ENCODE measurements at regions of chr6 and their contacts with region 1.

Region 1: DNA sequence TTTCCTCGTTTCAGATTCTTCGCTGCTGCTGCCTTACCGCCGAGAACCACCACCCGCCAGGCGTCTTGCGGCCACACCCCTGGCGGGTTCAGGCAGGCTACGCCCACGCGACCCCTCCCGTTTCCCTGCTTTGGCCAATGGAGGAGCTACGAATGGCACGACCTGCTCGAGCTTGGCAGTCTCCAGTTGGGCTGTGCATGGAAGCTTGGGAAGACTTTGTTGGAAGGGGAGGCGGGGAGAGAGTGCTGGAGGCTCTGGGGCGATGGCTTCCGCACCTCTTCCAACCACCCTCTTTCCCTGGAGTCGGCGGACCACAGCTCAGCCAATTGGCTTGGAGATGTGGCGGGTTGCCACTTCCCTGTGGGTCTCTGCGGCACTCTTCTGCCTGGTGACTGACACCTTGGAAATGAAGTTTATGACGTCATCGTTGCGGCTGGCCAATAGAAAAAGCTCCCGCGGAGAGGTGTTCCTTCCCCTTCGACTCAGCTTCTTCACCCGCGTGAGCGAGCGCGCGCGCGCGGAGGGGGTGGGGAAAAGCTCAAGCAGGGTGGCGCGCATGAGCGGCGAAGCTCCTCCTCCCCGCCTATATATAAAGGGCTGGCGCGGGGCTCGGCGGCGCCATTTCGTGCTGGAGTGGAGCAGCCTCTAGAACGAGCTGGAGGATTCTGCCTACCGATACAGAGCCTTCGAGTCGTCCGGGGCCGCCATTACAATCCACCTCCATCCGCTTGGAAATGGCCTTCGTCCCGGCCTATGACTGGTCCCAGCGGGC is 3.4 kb downstream of the BRD2 start:
- DNase-seq: peak; percentile 100
- H3K4me3 ChIP-seq: peak overlapping the region; percentile 90 to 95
- H3K4me3 Mint-ChIP-seq: peak overlapping the region; percentile 91 to 99 (median 95)
- H3K27ac ChIP-seq: peak overlapping the region; percentile 95
- H3K27ac Mint-ChIP-seq: peak overlapping the region; percentile 99 to 100 (median 100)
- H3K4me1 ChIP-seq: peaks cover 36% of the 10 kb centered on the region
- H3K4me1 Mint-ChIP-seq: peaks cover 26 to 84% (median 33%) of the 10 kb centered on the region in 4 donors
- H3K27me3 ChIP-seq: no peaks in the 10 kb centered on the region
- H3K27me3 Mint-ChIP-seq: no peaks in the 10 kb centered on the region

Region 2: DNA sequence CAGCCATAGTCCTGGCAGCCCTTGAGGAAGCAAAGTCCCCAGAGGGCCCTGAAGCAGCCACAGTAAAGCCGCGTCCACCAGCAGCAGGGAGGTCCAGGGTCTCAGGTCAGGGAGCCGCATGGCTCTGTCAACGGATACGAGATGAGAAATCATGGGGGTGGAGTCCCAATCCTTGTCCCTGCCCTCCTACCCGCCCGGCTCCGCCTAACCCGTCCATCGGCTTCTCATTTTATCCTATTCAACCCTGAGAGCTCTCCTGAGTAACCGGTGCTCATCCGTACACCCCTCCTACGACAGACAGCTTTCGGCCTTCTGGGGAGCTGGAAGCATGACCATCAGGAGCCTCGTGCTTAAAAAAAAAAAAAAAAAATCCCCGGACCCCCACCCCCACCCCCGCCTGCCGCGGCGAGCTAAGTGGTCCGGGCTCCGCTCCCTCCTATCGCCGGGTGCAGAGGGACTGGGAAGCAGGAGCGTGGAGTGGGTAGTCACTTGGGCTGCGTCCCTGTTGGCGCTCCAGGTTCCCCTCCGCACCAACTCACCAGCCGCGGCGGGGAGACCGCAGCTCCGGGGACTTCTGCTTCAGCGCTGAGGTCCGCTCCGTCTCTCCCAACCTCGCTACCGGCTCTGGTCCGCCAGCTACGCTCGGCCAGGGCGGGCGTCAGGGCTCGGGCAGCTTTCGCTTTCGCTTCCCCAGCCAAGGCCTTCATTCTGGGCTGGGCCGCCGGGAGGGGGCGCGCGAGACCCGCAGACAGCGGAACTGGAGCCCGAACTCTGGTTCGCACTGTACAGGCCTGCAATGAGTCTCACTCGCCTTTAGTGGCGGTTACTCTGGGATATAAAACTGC is 133.4 kb before region 1 on chr6 and contains the start of gene TAP2:
- CTCF ChIA-PET with region 1: interaction called, 23 read pairs
- POLR2A ChIA-PET with region 1: interaction called, 549 read pairs
- intact Hi-C with region 1: no loop called
- DNase-seq: peak; percentile 95 to 99 (median 96)
- H3K4me3 ChIP-seq: peak within 1 kb of the TSS; percentile 58 to 74
- H3K4me3 Mint-ChIP-seq: peak within 1 kb of the TSS; percentile 91 to 97 (median 93)
- H3K27ac ChIP-seq: peak within 1 kb of the TSS; percentile 99
- H3K27ac Mint-ChIP-seq: peak within 1 kb of the TSS; percentile 93 to 100 (median 99)
- H3K4me1 ChIP-seq: peaks cover 83% of the 10 kb centered on the region
- H3K4me1 Mint-ChIP-seq: peaks cover 66 to 99% (median 78%) of the 10 kb centered on the region in 4 donors
- H3K27me3 ChIP-seq: no peaks in the 10 kb centered on the region
- H3K27me3 Mint-ChIP-seq: no peaks in the 10 kb centered on the region
- total RNA-seq, gene TAP2: 106 to 112 TPM

Region 3: GRCh38 chr6:32894080-32895005 is 77.4 kb before region 1 on chr6:
- CTCF ChIA-PET with region 1: interaction called, 4 read pairs
- POLR2A ChIA-PET with region 1: interaction called, 186 read pairs
- intact Hi-C with region 1: loop called (anchors 5 kb)
- DNase-seq: peak; percentile 91 to 97 (median 91)
- H3K4me3 ChIP-seq: peak overlapping the region; percentile 78 to 90
- H3K4me3 Mint-ChIP-seq: peak overlapping the region; percentile 99 to 100 (median 100)
- H3K27ac ChIP-seq: peak overlapping the region; percentile 84
- H3K27ac Mint-ChIP-seq: peak overlapping the region; percentile 93 to 99 (median 98)
- H3K4me1 ChIP-seq: peaks cover 21% of the 10 kb centered on the region
- H3K4me1 Mint-ChIP-seq: peaks cover 14 to 45% (median 26%) of the 10 kb centered on the region in 4 donors
- H3K27me3 ChIP-seq: no peaks in the 10 kb centered on the region
- H3K27me3 Mint-ChIP-seq: no peaks in the 10 kb centered on the region

Region 4: DNA sequence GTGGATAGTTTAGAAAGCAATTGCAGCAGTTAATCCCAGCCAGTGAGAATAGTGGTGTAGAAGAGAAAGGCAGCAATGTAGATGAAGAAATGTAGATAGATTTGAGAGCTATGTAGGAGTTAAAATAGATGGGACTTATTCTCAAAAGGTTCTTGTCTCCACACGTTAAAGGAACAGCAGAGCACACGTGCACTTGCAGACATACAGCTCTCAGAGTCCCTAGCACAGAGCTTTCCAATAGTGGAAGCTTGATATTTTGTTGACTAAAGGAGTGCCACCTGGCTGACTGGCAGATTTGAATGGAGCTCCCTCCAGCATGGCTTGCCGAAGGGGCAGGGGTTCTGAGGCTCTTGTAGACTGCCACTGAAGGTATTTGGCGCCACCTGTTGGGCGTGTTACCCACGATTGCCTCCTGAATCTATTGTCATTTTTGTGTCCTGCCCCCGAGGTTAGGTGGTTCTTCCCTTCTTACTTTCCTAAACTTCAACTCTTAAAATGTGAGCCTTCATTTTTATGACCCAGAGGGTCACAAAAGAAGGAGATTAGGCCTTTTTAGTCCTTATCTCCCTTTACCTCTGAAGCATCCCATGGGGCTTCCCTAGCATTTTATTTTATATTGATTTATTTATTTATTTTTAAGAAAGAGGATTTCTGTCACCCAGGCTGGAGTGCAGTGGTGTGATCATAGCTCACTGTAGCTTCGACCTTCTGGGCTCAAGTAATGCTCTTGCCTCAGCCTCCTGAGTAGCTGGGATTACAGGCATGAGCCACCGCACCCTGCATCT is 13.0 kb after region 1 on chr6:
- CTCF ChIA-PET with region 1: interaction called, 221 read pairs
- POLR2A ChIA-PET with region 1: interaction called, 615 read pairs
- intact Hi-C with region 1: loop called (anchors 1 kb)
- DNase-seq: peak; percentile 83 to 88 (median 84)
- H3K4me3 ChIP-seq: no peak overlapping the region
- H3K4me3 Mint-ChIP-seq: no peak overlapping the region
- H3K27ac ChIP-seq: no peak overlapping the region
- H3K27ac Mint-ChIP-seq: peak overlapping the region; percentile 3 to 82 (median 45)
- H3K4me1 ChIP-seq: peaks cover 9% of the 10 kb centered on the region
- H3K4me1 Mint-ChIP-seq: peaks cover 18 to 34% (median 21%) of the 10 kb centered on the region in 4 donors
- H3K27me3 ChIP-seq: no peaks in the 10 kb centered on the region
- H3K27me3 Mint-ChIP-seq: no peaks in the 10 kb centered on the region

Region 5: GRCh38 chr6:33276864-33277662 is 305.3 kb after region 1 on chr6 and contains the start of gene B3GALT4:
- CTCF ChIA-PET with region 1: no interaction called
- POLR2A ChIA-PET with region 1: interaction called, 28 read pairs
- intact Hi-C with region 1: no loop called
- DNase-seq: peak; percentile 66 to 77 (median 75)
- H3K4me3 ChIP-seq: peak within 1 kb of the TSS; percentile 72 to 79
- H3K4me3 Mint-ChIP-seq: peak within 1 kb of the TSS; percentile 89 to 93 (median 91)
- H3K27ac ChIP-seq: peak within 1 kb of the TSS; percentile 82
- H3K27ac Mint-ChIP-seq: peak within 1 kb of the TSS; percentile 90 to 97 (median 94)
- H3K4me1 ChIP-seq: peaks cover 71% of the 10 kb centered on the region
- H3K4me1 Mint-ChIP-seq: peaks cover 35 to 87% (median 59%) of the 10 kb centered on the region in 4 donors
- H3K27me3 ChIP-seq: no peaks in the 10 kb centered on the region
- H3K27me3 Mint-ChIP-seq: no peaks in the 10 kb centered on the region
- total RNA-seq, gene B3GALT4: 43.3 to 46.7 TPM

Region 6: GRCh38 chr6:33417903-33418689 is 446.3 kb after region 1 on chr6 and contains the start of gene CUTA:
- CTCF ChIA-PET with region 1: no interaction called
- POLR2A ChIA-PET with region 1: interaction called, 13 read pairs
- intact Hi-C with region 1: no loop called
- DNase-seq: peak; percentile 97 to 100 (median 100)
- H3K4me3 ChIP-seq: peak within 1 kb of the TSS; percentile 82 to 94
- H3K4me3 Mint-ChIP-seq: peak within 1 kb of the TSS; percentile 87 to 97 (median 94)
- H3K27ac ChIP-seq: peak within 1 kb of the TSS; percentile 97
- H3K27ac Mint-ChIP-seq: peak within 1 kb of the TSS; percentile 99 to 100 (median 99)
- H3K4me1 ChIP-seq: peaks cover 72% of the 10 kb centered on the region
- H3K4me1 Mint-ChIP-seq: peaks cover 43 to 87% (median 61%) of the 10 kb centered on the region in 4 donors
- H3K27me3 ChIP-seq: no peaks in the 10 kb centered on the region
- H3K27me3 Mint-ChIP-seq: no peaks in the 10 kb centered on the region
- total RNA-seq, gene CUTA: 210 to 217 TPM